ENCODE measurements at regions of chr11 and their contacts with region 1.

Region 1: GRCh38 chr11:72574534-72575460 is 99.4 kb downstream of the PDE2A start:
- DNase-seq: peak in 1 of 3 donors; percentile 5
- H3K4me3 ChIP-seq: no peak overlapping the region
- H3K4me3 Mint-ChIP-seq: no peak overlapping the region
- H3K27ac ChIP-seq: no peak overlapping the region
- H3K27ac Mint-ChIP-seq: peak overlapping the region in 4 of 7 donors; percentile 28 to 48 (median 44)
- H3K4me1 ChIP-seq: peaks cover 10 to 16% of the 10 kb centered on the region in 2 donors
- H3K4me1 Mint-ChIP-seq: peaks cover 26% of the 10 kb centered on the region
- H3K27me3 ChIP-seq: no peaks in the 10 kb centered on the region
- H3K27me3 Mint-ChIP-seq: peaks cover 8 to 18% (median 15%) of the 10 kb centered on the region in 3 donors
- CTCF ChIP-seq: no peak

Region 2: DNA sequence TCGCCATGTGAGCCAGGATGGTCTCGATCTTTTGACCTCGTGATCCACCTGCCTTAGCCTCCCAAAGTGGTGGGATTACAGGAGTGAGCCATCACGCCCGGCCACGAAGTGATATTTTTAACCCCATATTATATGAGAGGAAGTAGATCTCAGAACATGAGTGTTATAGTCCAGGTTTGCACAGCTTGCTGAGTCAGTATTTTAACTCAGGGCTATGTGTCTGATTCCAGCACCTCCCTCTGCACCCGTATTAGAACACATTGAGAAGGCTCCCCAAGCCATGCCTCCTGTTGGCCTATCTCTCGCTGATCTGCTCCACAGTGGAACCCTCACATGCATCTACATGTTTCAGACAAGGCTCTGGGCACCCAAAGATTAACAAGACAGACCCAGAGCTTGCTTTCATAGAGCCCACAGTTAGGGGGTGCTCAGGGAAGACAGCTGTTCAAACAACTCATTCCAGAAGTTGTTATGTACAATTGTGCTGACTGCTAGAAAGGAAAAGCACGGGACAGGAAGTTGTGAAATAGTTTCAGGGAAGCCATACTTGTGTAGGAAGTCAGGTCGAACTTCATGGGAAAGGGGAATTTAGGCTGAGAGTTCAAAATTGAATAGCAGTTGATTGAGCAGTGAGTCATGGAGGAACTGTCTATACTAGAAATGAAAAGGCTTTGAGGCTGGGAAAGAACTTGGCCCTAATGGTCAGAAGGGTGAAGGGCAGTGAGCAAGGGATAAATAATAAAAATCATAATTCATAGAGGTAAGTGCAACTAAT is 91.2 kb before region 1 on chr11:
- intact Hi-C with region 1: loop called in 1 of 2 experiments (anchors 2 kb)
- DNase-seq: peak; percentile 88 to 98 (median 96)
- H3K4me3 ChIP-seq: peak overlapping the region in 1 of 3 experiments; percentile 29
- H3K4me3 Mint-ChIP-seq: peak overlapping the region; percentile 37 to 78
- H3K27ac ChIP-seq: peak overlapping the region; percentile 84 to 89
- H3K27ac Mint-ChIP-seq: peak overlapping the region; percentile 84 to 97 (median 92)
- H3K4me1 ChIP-seq: peaks cover 32% of the 10 kb centered on the region in 2 donors
- H3K4me1 Mint-ChIP-seq: peaks cover 33% of the 10 kb centered on the region
- H3K27me3 ChIP-seq: no peaks in the 10 kb centered on the region
- H3K27me3 Mint-ChIP-seq: peaks cover 1 to 3% (median 2%) of the 10 kb centered on the region in 3 donors
- CTCF ChIP-seq: peak; percentile 34